Caco-2 (cell line): ENCODE measurements at regions of chr7 and their contacts with region 1.

Region 1: GRCh38 chr7:816300-816750 is 16.0 kb upstream of the SUN1 start:
- DNase-seq: peak; percentile 98 to 99
- H3K4me3 ChIP-seq: peak overlapping the region; percentile 82
- H3K4me3 Mint-ChIP-seq: peak overlapping the region; percentile 95
- H3K27ac Mint-ChIP-seq: peak overlapping the region; percentile 70
- H3K4me1 ChIP-seq: no peaks in the 10 kb centered on the region
- H3K4me1 Mint-ChIP-seq: peaks cover 17% of the 10 kb centered on the region
- H3K27me3 ChIP-seq: no peaks in the 10 kb centered on the region
- H3K27me3 Mint-ChIP-seq: no peaks in the 10 kb centered on the region
- CTCF ChIP-seq: no peak

Region 2: DNA sequence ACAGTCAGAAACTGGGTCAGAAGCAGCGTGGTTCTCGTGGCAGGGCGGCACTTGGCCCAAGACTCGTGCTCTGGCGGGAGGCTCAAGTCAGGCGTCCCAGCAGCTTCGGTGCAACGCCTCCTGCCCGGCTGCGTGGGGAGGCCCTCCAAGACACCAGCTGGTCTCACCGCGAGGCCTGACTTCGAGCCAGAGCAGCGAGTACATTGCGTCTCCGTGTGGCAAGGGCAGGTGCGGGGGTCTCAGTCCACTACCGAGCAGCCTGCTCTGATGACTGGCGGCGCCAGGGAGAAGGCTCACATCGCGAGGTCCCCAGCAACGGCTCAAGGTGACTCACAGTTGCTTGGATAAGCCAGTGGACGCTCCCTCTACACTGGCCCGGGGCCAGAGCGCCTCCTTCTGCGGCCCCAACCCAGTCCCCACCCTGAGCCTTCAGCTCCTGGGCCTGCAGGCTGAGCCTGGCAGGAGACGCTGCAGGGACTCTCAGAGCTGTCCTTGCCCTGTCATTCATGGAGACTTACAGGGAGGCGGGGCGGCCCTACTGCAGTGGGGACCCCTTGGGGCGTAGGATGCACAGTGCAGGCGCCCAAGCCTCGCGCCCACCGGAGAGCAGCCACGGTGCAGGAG is 47.3 kb before region 1 on chr7:
- CTCF ChIA-PET with region 1: no interaction called
- POLR2A ChIA-PET with region 1: no interaction called
- intact Hi-C with region 1: no loop called
- DNase-seq: peak in 1 of 2 experiments; percentile 19
- H3K4me3 ChIP-seq: no peak overlapping the region
- H3K4me3 Mint-ChIP-seq: no peak overlapping the region
- H3K27ac Mint-ChIP-seq: peak overlapping the region; percentile 39
- H3K4me1 ChIP-seq: peaks cover 24% of the 10 kb centered on the region
- H3K4me1 Mint-ChIP-seq: peaks cover 7% of the 10 kb centered on the region
- H3K27me3 ChIP-seq: no peaks in the 10 kb centered on the region
- H3K27me3 Mint-ChIP-seq: no peaks in the 10 kb centered on the region
- CTCF ChIP-seq: no peak

Region 3: GRCh38 chr7:786472-787255 is 29.7 kb before region 1 on chr7:
- CTCF ChIA-PET with region 1: interaction called, 11 read pairs
- POLR2A ChIA-PET with region 1: no interaction called
- intact Hi-C with region 1: no loop called
- DNase-seq: peak; percentile 66 to 79
- H3K4me3 ChIP-seq: no peak overlapping the region
- H3K4me3 Mint-ChIP-seq: no peak overlapping the region
- H3K27ac Mint-ChIP-seq: no peak overlapping the region
- H3K4me1 ChIP-seq: no peaks in the 10 kb centered on the region
- H3K4me1 Mint-ChIP-seq: no peaks in the 10 kb centered on the region
- H3K27me3 ChIP-seq: no peaks in the 10 kb centered on the region
- H3K27me3 Mint-ChIP-seq: no peaks in the 10 kb centered on the region
- CTCF ChIP-seq: peak; percentile 71 to 90

Region 4: DNA sequence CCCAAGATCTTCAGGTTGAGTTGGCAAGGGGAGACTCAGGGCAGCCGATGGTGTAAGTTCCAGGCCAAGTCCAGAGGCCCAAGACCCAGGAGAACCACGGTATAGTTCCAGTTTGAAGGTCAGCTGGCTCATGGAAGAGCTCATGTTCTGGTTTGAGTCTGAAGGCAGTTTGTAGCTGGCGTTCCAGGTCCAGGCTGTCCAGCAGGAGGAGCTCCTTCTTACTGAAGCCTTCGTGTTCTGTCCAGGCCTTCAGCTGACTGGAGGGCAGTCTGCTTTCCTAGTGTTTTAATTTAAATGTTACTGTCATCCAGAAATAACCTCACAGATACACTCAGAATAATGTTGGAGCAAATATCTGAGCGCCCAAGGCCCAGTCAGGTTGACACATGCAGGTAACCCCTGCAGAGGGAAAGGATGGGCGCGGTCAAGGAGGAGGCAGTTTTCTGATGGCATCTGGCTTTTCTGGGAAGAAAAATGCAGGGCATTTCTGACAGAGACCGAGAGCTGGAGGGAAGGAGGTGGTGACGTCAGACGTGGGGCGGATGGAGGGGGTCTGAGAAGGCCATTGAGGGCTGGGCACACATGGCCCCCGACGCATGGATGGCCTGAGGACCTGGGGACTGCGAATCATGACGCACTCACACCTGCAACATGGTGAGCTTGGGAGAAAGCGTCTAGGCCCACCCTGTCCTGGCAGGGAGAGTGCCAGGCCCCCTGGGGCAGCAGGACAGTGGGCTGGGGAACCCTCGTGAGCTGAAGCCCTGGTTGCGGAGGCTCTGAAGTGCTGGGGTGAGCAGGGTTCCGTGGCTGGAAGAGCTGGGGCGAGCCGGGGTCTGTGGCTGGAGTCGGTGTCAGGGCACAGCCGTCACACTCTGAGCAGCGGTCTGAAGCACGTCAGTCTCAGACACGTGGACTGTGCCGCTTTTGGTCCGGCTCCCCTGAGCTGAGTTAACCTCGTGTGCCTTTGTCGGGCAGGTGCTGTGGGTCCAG is 20.4 kb after region 1 on chr7:
- CTCF ChIA-PET with region 1: interaction called, 13 read pairs
- POLR2A ChIA-PET with region 1: no interaction called
- intact Hi-C with region 1: no loop called
- DNase-seq: peak in 1 of 2 experiments; percentile 63
- H3K4me3 ChIP-seq: no peak overlapping the region
- H3K4me3 Mint-ChIP-seq: no peak overlapping the region
- H3K27ac Mint-ChIP-seq: peak overlapping the region; percentile 73
- H3K4me1 ChIP-seq: peaks cover 9% of the 10 kb centered on the region
- H3K4me1 Mint-ChIP-seq: peaks cover 13% of the 10 kb centered on the region
- H3K27me3 ChIP-seq: no peaks in the 10 kb centered on the region
- H3K27me3 Mint-ChIP-seq: no peaks in the 10 kb centered on the region
- CTCF ChIP-seq: peak; percentile 52 to 83